Naive thymus-derived CD4-positive, alpha-beta T cell (primary cell): ENCODE measurements at regions of chr12 and their contacts with region 1.

Region 1: DNA sequence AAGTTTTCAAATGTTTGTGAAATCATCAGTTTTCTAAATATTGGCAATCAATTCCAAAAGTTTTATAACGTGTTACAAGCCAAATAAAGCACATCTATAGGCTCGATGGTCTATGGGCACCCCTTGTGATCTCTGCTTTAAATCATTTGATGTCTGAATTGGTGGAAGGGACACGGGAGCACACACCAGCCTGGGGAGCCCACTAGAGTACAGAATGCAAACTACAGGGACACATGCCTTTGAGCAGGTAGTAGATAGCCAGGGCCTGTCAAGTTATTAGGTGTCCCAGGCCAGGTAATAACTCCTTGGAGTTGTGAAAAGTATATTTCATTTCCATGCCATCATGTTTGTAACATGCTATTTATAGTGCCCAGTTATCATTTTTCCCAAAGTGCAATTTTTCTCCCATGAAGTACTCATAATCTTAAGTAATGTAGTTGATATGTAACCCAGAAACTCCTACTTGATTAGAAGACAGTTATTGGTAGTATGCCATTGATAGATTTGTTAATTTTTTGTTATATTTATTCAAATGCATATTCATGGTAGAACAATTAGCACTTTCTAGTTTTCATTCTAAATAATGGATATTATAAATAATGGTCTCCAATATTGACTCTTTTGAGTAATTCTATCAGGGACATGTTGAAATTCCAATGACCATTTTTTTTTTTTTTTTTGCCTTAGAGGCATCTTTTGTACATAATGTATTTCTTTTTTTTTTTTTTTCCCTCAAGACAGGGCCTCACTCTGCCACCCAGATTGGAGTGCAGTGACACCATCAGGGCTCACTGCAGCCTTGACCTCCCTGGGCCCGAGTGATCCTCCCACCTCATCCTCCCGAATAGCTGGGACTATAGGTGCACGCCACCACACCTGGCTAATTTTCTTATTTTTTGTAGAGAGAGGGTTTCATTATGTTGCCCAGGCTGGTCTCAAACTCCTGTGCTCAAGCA is 96.9 kb upstream of the FGD4 start:
- DNase-seq: peak in 4 of 9 donors; percentile 8 to 28 (median 17)
- ATAC-seq: peak; percentile 71
- H3K4me3 ChIP-seq: no peak overlapping the region
- H3K4me3 Mint-ChIP-seq: no peak overlapping the region
- H3K27ac ChIP-seq: no peak overlapping the region
- H3K27ac Mint-ChIP-seq: peak overlapping the region in 5 of 9 donors; percentile 25 to 62 (median 31)
- H3K4me1 ChIP-seq: no peaks in the 10 kb centered on the region
- H3K4me1 Mint-ChIP-seq: peaks cover 0 to 19% (median 0%) of the 10 kb centered on the region in 7 donors
- H3K27me3 ChIP-seq: no peaks in the 10 kb centered on the region
- H3K27me3 Mint-ChIP-seq: no peaks in the 10 kb centered on the region

Region 2: DNA sequence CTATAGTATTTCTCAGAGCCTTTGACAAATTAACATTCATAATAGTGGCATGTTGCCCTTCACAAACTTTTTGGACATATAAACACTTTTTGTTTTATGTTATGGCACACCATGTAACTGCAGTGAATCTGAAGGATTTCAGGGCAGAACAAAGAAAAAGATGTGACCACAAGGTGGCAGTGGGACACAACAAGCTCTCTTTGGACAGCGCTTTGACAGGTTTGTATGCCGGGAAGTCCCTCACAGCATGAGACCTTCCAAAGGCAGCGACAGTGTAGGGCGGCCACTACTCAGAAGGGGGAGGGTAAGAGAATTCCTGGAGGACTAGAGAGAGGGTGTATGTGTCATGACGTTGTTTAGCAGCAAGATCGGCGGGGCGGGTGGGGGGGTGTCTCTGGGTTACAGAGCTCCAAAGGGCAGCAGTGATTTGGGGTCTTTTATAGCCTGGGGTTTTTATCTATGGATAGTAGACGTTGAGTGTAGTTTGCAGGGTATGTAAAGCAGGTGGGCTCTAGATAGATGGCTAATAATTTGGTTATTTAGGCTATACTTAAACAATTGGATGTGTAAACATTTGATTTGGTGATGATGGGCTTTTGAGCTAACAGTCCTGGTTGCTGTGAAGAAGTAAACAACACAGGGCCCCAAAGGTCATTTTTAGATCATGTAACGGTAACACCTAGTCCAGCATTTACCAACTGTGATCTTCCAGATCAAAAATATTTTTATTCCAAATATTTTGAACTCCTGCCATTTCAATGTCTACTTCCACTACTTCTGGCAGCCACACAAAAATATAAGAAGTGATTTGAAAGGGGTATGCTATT is 620.1 kb before region 1 on chr12:
- CTCF ChIA-PET with region 1: interaction called, 13 read pairs
- POLR2A ChIA-PET with region 1: no interaction called
- intact Hi-C with region 1: loop called (anchors 1 to 2 kb)
- DNase-seq: peak; percentile 30 to 72 (median 66)
- ATAC-seq: peak; percentile 96
- H3K4me3 ChIP-seq: no peak overlapping the region
- H3K4me3 Mint-ChIP-seq: peak overlapping the region in 9 of 10 donors; percentile 2 to 74 (median 23)
- H3K27ac ChIP-seq: no peak overlapping the region
- H3K27ac Mint-ChIP-seq: peak overlapping the region; percentile 9 to 97 (median 74)
- H3K4me1 ChIP-seq: peaks cover 0 to 5% of the 10 kb centered on the region in 2 donors
- H3K4me1 Mint-ChIP-seq: peaks cover 5 to 17% (median 11%) of the 10 kb centered on the region in 7 donors
- H3K27me3 ChIP-seq: no peaks in the 10 kb centered on the region
- H3K27me3 Mint-ChIP-seq: no peaks in the 10 kb centered on the region

Region 3: DNA sequence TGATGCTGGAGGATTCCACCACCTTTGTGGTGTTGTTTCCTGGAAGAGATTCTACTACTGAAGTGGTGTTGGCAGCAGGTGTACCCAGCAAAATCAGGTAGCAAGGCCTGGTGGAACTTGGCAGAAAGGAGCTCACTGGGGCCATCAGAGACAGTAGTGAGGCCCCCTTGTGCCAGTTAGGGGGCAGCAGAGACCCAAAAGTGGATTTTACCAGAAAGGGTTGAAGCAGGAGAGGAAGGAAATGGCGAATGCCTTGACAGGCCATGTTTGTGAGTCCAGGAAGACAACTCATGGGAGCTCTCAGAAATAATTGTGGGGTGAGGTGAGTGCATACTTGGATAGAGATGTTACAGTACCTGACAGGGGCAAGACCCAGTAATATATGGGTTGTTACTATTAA is 40.9 kb before region 1 on chr12:
- CTCF ChIA-PET with region 1: interaction called, 4 read pairs
- POLR2A ChIA-PET with region 1: no interaction called
- intact Hi-C with region 1: loop called in 1 of 2 experiments (anchors 2 kb)
- DNase-seq: no peak
- ATAC-seq: no peak
- H3K4me3 ChIP-seq: no peak overlapping the region
- H3K4me3 Mint-ChIP-seq: no peak overlapping the region
- H3K27ac ChIP-seq: no peak overlapping the region
- H3K27ac Mint-ChIP-seq: no peak overlapping the region
- H3K4me1 ChIP-seq: no peaks in the 10 kb centered on the region
- H3K4me1 Mint-ChIP-seq: peaks cover 3 to 18% (median 12%) of the 10 kb centered on the region in 7 donors
- H3K27me3 ChIP-seq: no peaks in the 10 kb centered on the region
- H3K27me3 Mint-ChIP-seq: no peaks in the 10 kb centered on the region

Region 4: GRCh38 chr12:32322354-32322753 is 19.9 kb after region 1 on chr12:
- CTCF ChIA-PET with region 1: no interaction called
- POLR2A ChIA-PET with region 1: no interaction called
- intact Hi-C with region 1: no loop called
- DNase-seq: no peak
- ATAC-seq: no peak
- H3K4me3 ChIP-seq: no peak overlapping the region
- H3K4me3 Mint-ChIP-seq: no peak overlapping the region
- H3K27ac ChIP-seq: no peak overlapping the region
- H3K27ac Mint-ChIP-seq: no peak overlapping the region
- H3K4me1 ChIP-seq: no peaks in the 10 kb centered on the region
- H3K4me1 Mint-ChIP-seq: no peaks in the 10 kb centered on the region
- H3K27me3 ChIP-seq: no peaks in the 10 kb centered on the region
- H3K27me3 Mint-ChIP-seq: no peaks in the 10 kb centered on the region